ENCODE measurements at regions of chr1 and their contacts with region 1.

Region 1: GRCh38 chr1:10494754-10495474 is 20.2 kb downstream of the PEX14 start:
- DNase-seq: no peak
- H3K4me3 ChIP-seq: peak overlapping the region; percentile 27
- H3K27ac ChIP-seq: no peak overlapping the region
- H3K27me3 ChIP-seq: no peaks in the 10 kb centered on the region
- CTCF ChIP-seq: peak; percentile 94

Region 2: DNA sequence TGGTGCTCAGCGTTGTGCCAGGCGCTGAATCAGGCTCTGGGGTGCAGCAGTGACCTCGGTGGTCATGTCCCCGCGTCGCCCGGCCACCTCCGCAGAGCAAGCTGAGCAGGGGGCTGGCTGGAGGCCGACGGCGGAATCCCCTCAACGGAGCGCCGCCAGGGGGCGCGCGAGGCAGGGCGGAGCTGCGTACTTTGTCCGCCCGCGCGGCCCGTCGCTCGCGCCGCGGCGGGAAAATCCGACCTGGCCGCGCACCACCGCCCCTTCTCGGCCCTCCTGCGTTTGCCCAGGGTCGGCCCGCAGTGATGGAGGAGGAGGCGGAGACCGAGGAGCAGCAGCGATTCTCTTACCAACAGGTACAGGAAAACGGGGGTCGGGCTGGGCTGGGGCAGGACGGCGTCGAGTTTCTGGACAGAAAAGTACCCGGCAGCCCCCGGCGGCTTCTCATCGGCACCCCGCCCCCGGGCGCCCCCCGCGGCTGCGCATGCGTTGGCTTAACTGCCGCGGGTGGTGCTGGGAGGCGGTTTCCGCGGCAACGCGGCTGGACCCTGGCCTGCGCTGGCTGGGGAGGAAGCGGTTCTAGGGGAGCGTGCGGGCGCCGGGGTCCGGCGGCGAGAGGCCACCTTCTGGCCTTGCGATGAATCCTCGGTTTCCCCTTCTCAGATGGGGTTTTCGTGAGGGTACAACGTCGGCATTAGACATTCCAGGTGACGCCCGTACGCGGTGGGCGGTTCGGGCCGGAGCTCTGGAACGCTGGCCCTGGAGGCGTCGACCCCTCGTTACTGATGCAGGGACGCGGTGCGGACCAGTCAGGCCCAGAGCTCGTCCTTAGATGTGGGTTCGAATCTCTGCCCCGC is 64.5 kb before region 1 on chr1 and contains the start of gene CENPS:
- CTCF ChIA-PET with region 1: interaction called, 98 read pairs
- POLR2A ChIA-PET with region 1: interaction called, 7 read pairs
- DNase-seq: peak; percentile 55
- H3K4me3 ChIP-seq: peak within 1 kb of the TSS; percentile 87
- H3K27ac ChIP-seq: peak within 1 kb of the TSS; percentile 68
- H3K27me3 ChIP-seq: no peaks in the 10 kb centered on the region
- CTCF ChIP-seq: peak; percentile 86
- polyA plus RNA-seq, gene CENPS: 10.5 and 11.4 TPM in 2 replicates

Region 3: DNA sequence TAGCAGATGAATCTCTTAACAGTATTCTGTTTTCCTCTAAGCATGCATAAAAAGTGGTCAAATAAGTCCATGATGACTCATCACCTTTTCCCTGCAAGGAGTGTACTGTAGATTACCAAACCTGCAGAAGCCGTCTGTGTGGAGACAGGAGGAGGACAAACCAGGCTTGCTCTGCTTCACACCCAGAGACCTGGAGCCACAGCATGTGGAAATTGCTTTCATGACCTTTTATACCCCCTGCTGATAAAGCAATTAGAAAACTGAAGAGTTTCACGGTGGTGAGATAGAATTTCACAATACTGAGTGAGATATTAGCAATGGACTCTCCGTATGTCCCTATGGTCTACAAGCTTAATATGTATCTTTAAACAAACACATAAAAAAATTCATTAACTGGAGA is 35.7 kb before region 1 on chr1:
- CTCF ChIA-PET with region 1: interaction called, 11 read pairs
- POLR2A ChIA-PET with region 1: no interaction called
- DNase-seq: peak; percentile 41
- H3K4me3 ChIP-seq: no peak overlapping the region
- H3K27ac ChIP-seq: no peak overlapping the region
- H3K27me3 ChIP-seq: no peaks in the 10 kb centered on the region
- CTCF ChIP-seq: no peak

Region 4: DNA sequence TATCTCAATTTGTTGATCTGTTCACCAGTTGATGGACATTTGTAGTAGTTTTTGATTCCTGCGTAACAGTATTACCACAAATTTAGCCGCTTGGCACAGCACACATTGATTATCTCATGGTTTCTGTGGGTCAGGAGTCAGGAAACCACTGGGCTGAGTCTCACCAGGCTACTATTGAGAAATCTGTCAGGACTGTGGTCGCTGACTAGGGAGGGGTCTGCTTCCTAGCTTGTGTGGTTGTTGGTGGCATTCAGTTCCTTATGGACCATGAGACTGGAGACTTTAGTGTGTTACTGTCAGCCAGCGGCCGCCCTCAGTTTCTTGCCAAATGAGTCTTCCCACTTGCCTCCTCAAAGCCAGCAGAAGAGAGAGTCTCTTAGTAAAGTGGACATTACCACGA is 10.4 kb before region 1 on chr1:
- CTCF ChIA-PET with region 1: interaction called, 32 read pairs
- POLR2A ChIA-PET with region 1: no interaction called
- DNase-seq: no peak
- H3K4me3 ChIP-seq: no peak overlapping the region
- H3K27ac ChIP-seq: peak overlapping the region; percentile 21
- H3K27me3 ChIP-seq: no peaks in the 10 kb centered on the region
- CTCF ChIP-seq: no peak

Region 5: DNA sequence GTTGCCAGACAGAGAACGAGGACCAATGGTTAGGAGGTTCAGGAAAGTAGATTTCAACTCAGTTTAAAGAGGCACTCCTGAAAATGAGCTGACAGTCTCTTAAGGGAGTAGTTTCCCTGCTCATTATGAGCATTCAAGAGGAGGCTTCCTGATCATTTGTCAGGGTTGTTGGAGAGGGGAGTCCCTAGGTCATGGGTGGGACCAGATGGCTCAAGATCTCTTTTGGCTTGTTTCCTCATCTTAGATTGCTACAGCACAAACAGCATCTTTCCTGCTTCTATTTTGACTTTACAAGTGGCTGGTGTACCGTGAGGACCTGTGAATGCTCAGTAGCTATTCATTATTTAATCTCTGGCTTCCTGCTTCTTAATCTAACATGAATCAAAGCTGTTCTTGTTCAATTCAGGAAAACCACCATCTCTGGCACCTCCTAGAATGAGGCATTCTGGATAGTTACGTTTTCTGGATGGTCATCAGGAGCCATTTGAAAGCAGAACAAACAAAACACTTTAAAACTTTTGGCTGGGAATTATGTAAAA is 27.5 kb after region 1 on chr1:
- CTCF ChIA-PET with region 1: interaction called, 16 read pairs
- POLR2A ChIA-PET with region 1: no interaction called
- DNase-seq: no peak
- H3K4me3 ChIP-seq: no peak overlapping the region
- H3K27ac ChIP-seq: no peak overlapping the region
- H3K27me3 ChIP-seq: no peaks in the 10 kb centered on the region
- CTCF ChIP-seq: no peak

Region 6: DNA sequence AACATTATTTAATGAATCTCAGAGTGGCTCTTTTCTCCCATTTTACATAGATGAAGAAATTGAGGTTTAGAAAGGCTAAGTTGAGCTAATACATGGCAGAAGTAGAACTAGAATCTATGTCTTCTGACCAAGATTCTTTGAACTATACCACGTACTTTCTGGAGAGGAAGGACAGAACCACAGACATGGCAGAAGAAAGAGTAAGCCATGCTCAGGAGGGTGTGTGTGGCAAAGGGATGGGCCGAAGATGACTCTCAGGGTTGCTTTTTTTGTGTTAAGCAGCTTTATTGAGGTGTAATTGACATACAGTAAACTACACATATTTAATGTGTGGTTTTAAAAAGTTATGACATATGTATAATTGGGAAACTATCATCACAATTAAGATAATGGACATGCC is 49.3 kb after region 1 on chr1:
- CTCF ChIA-PET with region 1: no interaction called
- POLR2A ChIA-PET with region 1: no interaction called
- DNase-seq: no peak
- H3K4me3 ChIP-seq: no peak overlapping the region
- H3K27ac ChIP-seq: no peak overlapping the region
- H3K27me3 ChIP-seq: no peaks in the 10 kb centered on the region
- CTCF ChIP-seq: no peak

Measured in AG04450 (cell line).